B cell (primary cell): ENCODE measurements at regions of chr2 and their contacts with region 1.

Region 1: GRCh38 chr2:70086838-70087701 is at the start of gene PCBP1:
- DNase-seq: peak; percentile 97
- ATAC-seq: peak; percentile 60
- H3K4me3 ChIP-seq: peak within 1 kb of the TSS; percentile 66 to 99 (median 98)
- H3K4me3 Mint-ChIP-seq: peak within 1 kb of the TSS; percentile 94
- H3K27ac ChIP-seq: peak within 1 kb of the TSS; percentile 97 to 100
- H3K27ac Mint-ChIP-seq: peak within 1 kb of the TSS; percentile 100
- H3K4me1 ChIP-seq: peaks cover 63 to 73% of the 10 kb centered on the region in 2 donors
- H3K4me1 Mint-ChIP-seq: peaks cover 74% of the 10 kb centered on the region
- H3K27me3 ChIP-seq: no peaks in the 10 kb centered on the region
- H3K27me3 Mint-ChIP-seq: no peaks in the 10 kb centered on the region
- CTCF ChIP-seq: no peak
- total RNA-seq, gene PCBP1: 304 and 327 TPM in 2 replicates

Region 2: DNA sequence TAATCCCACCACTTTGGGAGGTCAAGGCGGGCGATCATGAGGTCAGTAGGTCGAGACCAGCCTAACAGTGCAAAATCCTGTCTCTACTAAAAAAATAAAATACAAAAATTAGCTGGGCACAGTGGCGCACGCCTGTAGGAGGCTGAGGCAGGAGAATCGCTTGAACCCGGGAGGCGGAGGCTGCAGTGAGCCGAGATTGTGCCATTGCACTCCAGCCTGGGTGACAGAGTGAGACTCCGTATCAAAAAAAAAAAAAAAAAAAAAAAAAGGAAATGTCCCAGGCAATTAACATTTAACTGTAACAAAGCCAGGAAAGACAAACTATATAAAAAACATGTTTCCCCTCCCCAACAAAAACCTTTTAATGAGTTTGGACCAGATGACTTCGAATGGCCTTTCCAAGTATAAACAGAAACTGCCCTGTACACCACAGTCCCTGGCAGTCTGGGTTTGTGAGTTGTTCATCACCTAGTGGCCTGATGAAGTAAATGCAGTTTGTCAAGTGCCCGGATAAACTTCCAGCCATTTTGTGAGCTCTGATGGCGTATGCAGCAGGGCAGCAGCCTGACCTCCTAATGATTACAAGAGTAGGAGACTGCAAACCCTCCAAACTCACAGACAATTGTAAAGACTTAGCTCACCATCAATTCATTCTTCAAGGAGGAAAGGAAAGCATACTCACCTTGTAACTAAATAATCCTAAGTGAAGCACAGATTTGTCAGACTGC is 16.4 kb before region 1 on chr2:
- CTCF ChIA-PET with region 1: interaction called, 49 read pairs
- POLR2A ChIA-PET with region 1: interaction called, 16 read pairs
- intact Hi-C with region 1: loop called (anchors 1 kb)
- DNase-seq: peak; percentile 86
- ATAC-seq: peak; percentile 96
- H3K4me3 ChIP-seq: no peak overlapping the region
- H3K4me3 Mint-ChIP-seq: peak overlapping the region; percentile 63
- H3K27ac ChIP-seq: peak overlapping the region; percentile 57 to 79
- H3K27ac Mint-ChIP-seq: peak overlapping the region; percentile 88
- H3K4me1 ChIP-seq: peaks cover 32 to 33% of the 10 kb centered on the region in 2 donors
- H3K4me1 Mint-ChIP-seq: peaks cover 30% of the 10 kb centered on the region
- H3K27me3 ChIP-seq: no peaks in the 10 kb centered on the region
- H3K27me3 Mint-ChIP-seq: no peaks in the 10 kb centered on the region
- CTCF ChIP-seq: peak; percentile 79

Region 3: DNA sequence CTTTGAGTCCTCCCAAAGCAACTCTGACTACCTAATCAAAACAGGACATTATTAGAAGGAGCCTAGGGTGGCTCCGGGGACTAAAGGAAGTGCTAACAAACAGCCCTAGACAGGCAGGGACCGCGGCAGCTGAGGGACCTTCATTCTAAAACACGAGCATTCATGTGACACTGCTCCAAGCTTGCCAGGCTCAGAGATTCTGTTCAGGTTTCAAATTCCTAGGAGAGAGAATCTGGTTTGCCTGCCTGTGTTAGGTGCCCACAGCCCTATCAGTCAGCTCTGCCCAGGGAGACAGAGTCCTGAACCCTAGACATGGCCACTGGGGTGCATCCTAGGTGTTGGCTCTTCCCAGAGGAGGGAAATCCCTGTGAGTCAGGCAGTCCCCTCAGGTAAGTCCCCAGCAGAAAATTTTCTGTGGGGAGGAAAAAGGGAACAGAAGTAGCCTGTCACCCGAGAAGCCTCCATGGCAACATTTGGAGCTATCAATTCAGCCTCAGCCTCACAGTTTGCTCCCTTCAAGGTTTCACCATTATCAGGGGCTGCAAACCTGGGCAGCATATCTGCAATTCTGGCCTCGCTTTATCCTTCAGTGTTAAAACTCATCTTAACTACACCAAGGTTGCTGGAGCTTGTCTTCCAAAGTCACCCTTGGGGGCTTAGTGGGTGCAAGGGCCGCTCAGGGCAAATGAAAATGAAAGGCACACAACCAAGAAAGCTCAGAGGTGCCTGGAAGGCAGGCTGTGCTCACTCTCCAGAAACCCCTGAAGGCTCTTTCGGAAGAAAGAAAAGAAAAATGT is 28.8 kb after region 1 on chr2:
- CTCF ChIA-PET with region 1: interaction called, 59 read pairs
- POLR2A ChIA-PET with region 1: interaction called, 170 read pairs
- intact Hi-C with region 1: no loop called
- DNase-seq: peak; percentile 57
- ATAC-seq: peak; percentile 66
- H3K4me3 ChIP-seq: peak overlapping the region in 2 of 5 experiments; percentile 8 to 16
- H3K4me3 Mint-ChIP-seq: peak overlapping the region; percentile 65
- H3K27ac ChIP-seq: peak overlapping the region in 1 of 2 donors; percentile 46
- H3K27ac Mint-ChIP-seq: peak overlapping the region; percentile 89
- H3K4me1 ChIP-seq: peaks cover 23 to 44% of the 10 kb centered on the region in 2 donors
- H3K4me1 Mint-ChIP-seq: peaks cover 38% of the 10 kb centered on the region
- H3K27me3 ChIP-seq: no peaks in the 10 kb centered on the region
- H3K27me3 Mint-ChIP-seq: no peaks in the 10 kb centered on the region
- CTCF ChIP-seq: no peak

Region 4: DNA sequence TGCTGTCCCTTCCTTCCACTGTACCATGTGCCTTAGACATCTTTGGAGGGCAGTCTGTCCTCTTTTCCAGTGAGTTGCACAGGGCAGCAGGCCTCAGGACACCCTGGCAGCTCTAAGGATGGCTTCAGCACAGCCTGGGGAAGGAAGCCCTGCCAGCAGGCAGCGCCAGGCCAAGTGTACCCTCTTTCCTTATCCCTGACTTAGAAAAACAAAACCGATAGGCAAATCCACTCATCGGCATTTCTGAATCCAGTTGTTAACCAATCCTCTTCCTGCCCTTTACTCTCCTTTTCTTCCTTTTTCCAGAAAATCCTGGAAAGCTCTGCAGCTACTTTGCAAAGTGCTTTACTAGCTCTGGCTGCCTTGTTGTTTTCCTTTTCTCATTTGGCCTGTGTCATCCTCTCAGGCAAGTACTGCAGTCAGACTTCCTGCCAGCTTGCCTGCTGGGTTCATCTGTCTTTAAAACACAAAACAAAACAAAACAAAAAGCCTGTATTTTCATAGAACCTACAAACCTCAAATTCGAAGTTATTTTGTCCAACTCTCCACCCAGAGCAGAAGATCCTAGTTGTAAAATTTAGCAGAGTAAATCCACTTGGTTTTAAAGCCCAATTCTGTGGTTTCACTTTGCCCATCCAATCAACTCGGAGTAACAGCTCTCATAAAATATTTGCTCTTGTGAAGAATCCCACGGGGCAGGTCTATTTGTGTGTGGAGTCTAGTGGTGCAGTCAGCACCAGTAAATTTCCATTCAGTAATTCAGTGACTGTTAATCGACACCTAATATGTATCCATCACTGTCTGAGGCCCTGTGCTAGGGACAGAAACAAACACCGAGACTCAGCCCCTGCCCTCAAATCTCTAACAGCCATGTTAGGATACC is 45.4 kb after region 1 on chr2:
- CTCF ChIA-PET with region 1: interaction called, 98 read pairs
- POLR2A ChIA-PET with region 1: interaction called, 170 read pairs
- intact Hi-C with region 1: loop called (anchors 2 kb)
- DNase-seq: peak; percentile 77
- ATAC-seq: peak; percentile 74
- H3K4me3 ChIP-seq: peak overlapping the region; percentile 35 to 62 (median 53)
- H3K4me3 Mint-ChIP-seq: peak overlapping the region; percentile 87
- H3K27ac ChIP-seq: peak overlapping the region; percentile 80 to 87
- H3K27ac Mint-ChIP-seq: peak overlapping the region; percentile 96
- H3K4me1 ChIP-seq: peaks cover 52 to 61% of the 10 kb centered on the region in 2 donors
- H3K4me1 Mint-ChIP-seq: peaks cover 59% of the 10 kb centered on the region
- H3K27me3 ChIP-seq: no peaks in the 10 kb centered on the region
- H3K27me3 Mint-ChIP-seq: no peaks in the 10 kb centered on the region
- CTCF ChIP-seq: no peak

Region 5: GRCh38 chr2:70142590-70143313 is 55.7 kb after region 1 on chr2:
- CTCF ChIA-PET with region 1: interaction called, 98 read pairs
- POLR2A ChIA-PET with region 1: interaction called, 115 read pairs
- intact Hi-C with region 1: loop called (anchors 1 kb)
- DNase-seq: peak; percentile 100
- ATAC-seq: peak; percentile 75
- H3K4me3 ChIP-seq: peak overlapping the region; percentile 61 to 91 (median 71)
- H3K4me3 Mint-ChIP-seq: peak overlapping the region; percentile 91
- H3K27ac ChIP-seq: peak overlapping the region; percentile 97 to 98
- H3K27ac Mint-ChIP-seq: peak overlapping the region; percentile 98
- H3K4me1 ChIP-seq: peaks cover 24 to 32% of the 10 kb centered on the region in 2 donors
- H3K4me1 Mint-ChIP-seq: peaks cover 50% of the 10 kb centered on the region
- H3K27me3 ChIP-seq: no peaks in the 10 kb centered on the region
- H3K27me3 Mint-ChIP-seq: no peaks in the 10 kb centered on the region
- CTCF ChIP-seq: peak; percentile 88

Region 6: DNA sequence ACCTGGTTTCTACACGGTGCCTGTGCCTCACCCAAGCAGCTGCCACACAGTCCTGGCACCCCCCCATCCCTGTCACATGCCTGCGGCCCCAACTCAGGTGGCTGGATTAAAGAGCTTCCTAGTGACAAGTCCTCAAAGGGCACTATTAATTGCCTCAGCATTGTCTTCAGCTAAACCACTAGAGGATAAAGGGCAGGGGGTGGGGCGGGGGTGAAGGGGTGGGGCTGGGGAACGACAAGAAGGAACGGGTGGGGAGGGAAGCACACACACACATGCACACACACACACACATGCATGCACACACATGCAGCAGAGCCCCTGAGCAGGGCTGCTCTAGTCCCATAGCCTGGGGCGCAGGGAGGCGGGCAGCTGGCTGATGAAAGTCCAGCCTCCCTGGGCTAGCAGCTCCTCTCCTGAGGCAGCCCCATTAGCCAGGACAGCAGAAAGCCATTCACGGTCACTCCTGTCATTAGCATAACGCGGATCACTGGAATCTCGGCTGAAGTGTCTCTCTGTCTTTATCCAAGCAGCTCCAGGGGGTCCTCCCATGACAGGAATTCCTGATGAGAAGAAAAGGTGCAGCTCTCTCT is 915.0 kb after region 1 on chr2:
- CTCF ChIA-PET with region 1: no interaction called
- POLR2A ChIA-PET with region 1: no interaction called
- intact Hi-C with region 1: no loop called
- DNase-seq: no peak
- ATAC-seq: no peak
- H3K4me3 ChIP-seq: no peak overlapping the region
- H3K4me3 Mint-ChIP-seq: no peak overlapping the region
- H3K27ac ChIP-seq: no peak overlapping the region
- H3K27ac Mint-ChIP-seq: no peak overlapping the region
- H3K4me1 ChIP-seq: peaks cover 3 to 10% of the 10 kb centered on the region in 2 donors
- H3K4me1 Mint-ChIP-seq: peaks cover 5% of the 10 kb centered on the region
- H3K27me3 ChIP-seq: no peaks in the 10 kb centered on the region
- H3K27me3 Mint-ChIP-seq: peaks cover 12% of the 10 kb centered on the region
- CTCF ChIP-seq: no peak